Thyroid gland (tissue), 4 donors: ENCODE measurements at regions of chr5 and their contacts with region 1.

Region 1: DNA sequence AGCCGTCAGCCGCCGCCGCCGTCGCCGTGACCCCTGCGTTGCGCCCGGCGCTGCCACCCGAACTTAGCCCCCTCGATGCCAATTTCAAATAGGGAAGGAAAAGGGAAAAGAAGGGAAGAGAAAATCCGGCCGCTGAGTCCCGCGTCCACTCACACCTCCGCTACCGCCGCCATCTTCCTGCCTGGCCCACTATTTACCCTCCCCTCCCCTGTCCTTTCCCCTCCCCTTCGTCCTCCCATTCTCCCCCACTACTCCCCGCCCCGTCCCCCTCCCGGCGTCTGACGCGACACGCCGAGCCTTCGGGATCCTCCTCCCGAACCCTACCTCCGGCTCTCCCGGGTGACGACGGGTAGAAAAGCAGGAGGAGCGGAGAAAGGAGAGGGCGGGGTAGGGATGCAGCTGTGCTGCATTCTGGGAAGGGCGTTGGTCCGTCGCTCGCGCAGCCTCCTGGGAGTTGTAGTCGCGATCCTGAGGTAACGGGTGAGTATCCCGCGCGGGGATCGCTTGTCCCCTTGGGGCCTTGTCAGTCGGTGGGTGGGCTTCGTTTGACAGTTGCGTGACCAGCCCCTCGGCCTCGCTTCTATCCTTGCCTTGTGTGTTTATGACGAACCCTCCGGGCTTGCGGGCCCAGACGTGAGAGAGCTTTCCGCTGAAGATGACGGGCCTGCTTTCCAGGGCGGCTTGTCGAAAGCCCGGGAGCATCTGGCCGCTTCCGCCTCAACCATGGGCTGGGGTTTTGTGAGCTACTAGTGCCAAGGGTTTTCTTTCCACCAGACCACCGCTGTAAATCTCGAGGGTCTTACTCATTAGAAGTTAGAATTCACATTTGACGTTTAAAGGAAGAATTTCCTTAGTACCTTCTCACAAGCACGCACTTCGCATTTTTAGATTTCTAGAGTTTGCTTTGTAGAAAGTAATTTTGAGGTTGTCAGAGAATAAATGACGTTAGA is at the starts of genes CERT1 and POLK:
- DNase-seq: peak; percentile 98 to 99
- H3K4me3 ChIP-seq: peak within 1 kb of the TSS; percentile 86 to 95 (median 88)
- H3K27ac ChIP-seq: peak within 1 kb of the TSS; percentile 72 to 96 (median 92)
- H3K4me1 ChIP-seq: peaks cover 29 to 32% of the 10 kb centered on the region in 2 donors
- H3K27me3 ChIP-seq: no peaks in the 10 kb centered on the region
- CTCF ChIP-seq: no peak
- POLR2A ChIP-seq: peak; percentile 55 to 92
- total RNA-seq, gene CERT1: 66.3 to 87.5 (median 78.0) TPM
- total RNA-seq, gene POLK: 49.8 to 74.5 (median 63.3) TPM

Region 2: GRCh38 chr5:75236322-75237316 is 275.1 kb before region 1 on chr5 and contains the start of gene ANKRD31:
- intact Hi-C with region 1: loop called (anchors 5 kb)
- DNase-seq: peak; percentile 84 to 86
- H3K4me3 ChIP-seq: peak within 1 kb of the TSS; percentile 13 to 65 (median 46)
- H3K27ac ChIP-seq: peak within 1 kb of the TSS; percentile 50 to 82 (median 67)
- H3K4me1 ChIP-seq: peaks cover 5 to 6% of the 10 kb centered on the region in 2 donors
- H3K27me3 ChIP-seq: no peaks in the 10 kb centered on the region
- CTCF ChIP-seq: peak; percentile 43 to 98 (median 92)
- POLR2A ChIP-seq: peak in 1 of 2 donors; percentile 77
- total RNA-seq, gene ANKRD31: 0.11 to 0.81 (median 0.33) TPM

Region 3: GRCh38 chr5:75340714-75341478 is 170.8 kb before region 1 on chr5:
- intact Hi-C with region 1: no loop called
- DNase-seq: no peak
- H3K4me3 ChIP-seq: no peak overlapping the region
- H3K27ac ChIP-seq: no peak overlapping the region
- H3K4me1 ChIP-seq: peaks cover 10 to 24% of the 10 kb centered on the region in 2 donors
- H3K27me3 ChIP-seq: no peaks in the 10 kb centered on the region
- CTCF ChIP-seq: no peak
- POLR2A ChIP-seq: no peak